ENCODE measurements at regions of chr15 and their contacts with region 1.

Region 1: GRCh38 chr15:80099241-80099640 is 39.8 kb downstream of the ZFAND6 start:
- DNase-seq: no peak
- ATAC-seq: peak; percentile 57
- H3K4me3 Mint-ChIP-seq: peak overlapping the region; percentile 45
- H3K27ac Mint-ChIP-seq: peak overlapping the region; percentile 51
- H3K4me1 Mint-ChIP-seq: peaks cover 56% of the 10 kb centered on the region
- H3K27me3 Mint-ChIP-seq: no peaks in the 10 kb centered on the region
- CTCF ChIP-seq: no peak

Region 2: GRCh38 chr15:80114114-80114513 is 14.9 kb after region 1 on chr15:
- CTCF ChIA-PET with region 1: no interaction called
- POLR2A ChIA-PET with region 1: no interaction called
- intact Hi-C with region 1: loop called (anchors 2 kb)
- DNase-seq: no peak
- ATAC-seq: no peak
- H3K4me3 Mint-ChIP-seq: no peak overlapping the region
- H3K27ac Mint-ChIP-seq: no peak overlapping the region
- H3K4me1 Mint-ChIP-seq: peaks cover 57% of the 10 kb centered on the region
- H3K27me3 Mint-ChIP-seq: no peaks in the 10 kb centered on the region
- CTCF ChIP-seq: no peak

Measured in activated B cell treated with CpG ODN at 0.5 μM for 24 hours (primary cell).